Activated B cell treated with CpG ODN at 0.5 μM for 24 hours (primary cell): ENCODE measurements at regions of chr4 and their contacts with region 1.

Region 1: DNA sequence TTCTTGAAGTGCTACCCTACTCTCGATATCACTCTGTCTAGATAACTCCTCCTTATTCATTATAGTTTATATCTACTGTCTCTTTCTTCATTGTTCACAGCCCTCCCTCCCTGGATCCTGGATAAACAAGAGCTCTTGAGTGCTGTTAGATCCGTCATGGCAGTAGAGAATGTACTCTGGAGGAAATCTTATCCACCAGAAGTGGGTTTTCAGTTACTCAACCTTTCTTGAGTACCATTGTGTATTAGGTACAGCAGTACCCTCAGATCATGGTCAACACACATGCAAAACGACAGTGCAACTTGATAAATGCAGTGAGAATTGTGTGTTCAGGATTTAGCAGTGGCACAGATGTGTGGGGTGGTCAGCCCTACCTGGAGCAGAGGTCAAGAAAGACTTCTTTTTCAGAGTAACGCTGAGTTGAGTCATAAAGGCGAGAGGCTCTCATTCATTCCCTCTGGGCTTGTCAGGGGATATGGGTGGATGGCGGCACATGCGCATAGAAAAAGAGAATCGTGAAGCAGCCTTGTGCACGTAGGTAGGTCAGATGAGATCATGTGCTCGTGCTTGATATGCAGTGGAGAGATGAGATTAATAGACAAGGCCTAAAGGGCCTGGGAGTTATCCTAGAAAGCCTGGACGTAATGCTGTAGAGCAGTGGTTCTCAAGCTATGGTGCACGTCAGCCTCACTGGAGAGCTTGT is 89.5 kb downstream of the SNX25 start:
- DNase-seq: no peak
- ATAC-seq: no peak
- H3K4me3 Mint-ChIP-seq: no peak overlapping the region
- H3K27ac Mint-ChIP-seq: no peak overlapping the region
- H3K4me1 Mint-ChIP-seq: peaks cover 8% of the 10 kb centered on the region
- H3K27me3 Mint-ChIP-seq: no peaks in the 10 kb centered on the region
- CTCF ChIP-seq: no peak

Region 2: DNA sequence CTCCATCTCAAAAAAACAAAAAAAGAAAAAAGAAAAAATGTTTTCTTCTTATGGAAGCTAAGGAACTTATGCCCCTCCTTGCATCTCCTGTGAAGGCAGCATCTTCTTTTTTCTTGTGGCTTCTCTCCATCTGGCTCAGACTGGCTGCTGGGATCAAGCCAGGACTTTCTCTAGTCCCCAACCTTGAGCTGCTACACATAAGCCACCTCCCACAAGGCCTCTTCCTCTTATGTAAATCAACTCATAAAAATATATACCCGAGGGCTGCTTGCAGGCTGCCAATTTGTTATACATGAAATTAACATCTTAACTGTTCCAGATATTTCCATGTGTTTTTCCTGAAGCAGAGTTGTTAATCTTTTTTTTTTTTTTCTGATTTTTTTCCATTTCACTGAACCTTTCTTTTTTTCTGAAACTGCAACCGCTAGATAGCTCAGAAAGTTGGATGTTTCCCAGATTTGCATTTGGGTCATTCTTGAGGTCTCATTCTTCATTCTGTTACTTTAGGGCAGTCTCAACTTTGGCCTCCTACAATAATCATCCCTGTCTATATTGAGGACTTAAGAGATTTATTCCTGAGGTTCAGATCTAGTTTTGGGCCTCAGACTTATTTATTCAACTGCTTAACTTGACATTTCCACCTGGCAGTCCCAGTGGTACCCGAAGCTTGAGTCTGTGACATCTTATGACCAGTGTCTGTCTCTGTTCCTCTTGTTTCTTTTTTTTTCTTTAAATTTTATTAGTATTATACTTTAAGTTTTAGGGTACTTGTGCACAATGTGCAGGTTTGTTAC is 79.1 kb before region 1 on chr4:
- CTCF ChIA-PET with region 1: no interaction called
- POLR2A ChIA-PET with region 1: interaction called, 10 read pairs
- intact Hi-C with region 1: no loop called
- DNase-seq: no peak
- ATAC-seq: peak; percentile 82
- H3K4me3 Mint-ChIP-seq: peak overlapping the region; percentile 74
- H3K27ac Mint-ChIP-seq: peak overlapping the region; percentile 87
- H3K4me1 Mint-ChIP-seq: peaks cover 79% of the 10 kb centered on the region
- H3K27me3 Mint-ChIP-seq: no peaks in the 10 kb centered on the region
- CTCF ChIP-seq: no peak

Region 3: DNA sequence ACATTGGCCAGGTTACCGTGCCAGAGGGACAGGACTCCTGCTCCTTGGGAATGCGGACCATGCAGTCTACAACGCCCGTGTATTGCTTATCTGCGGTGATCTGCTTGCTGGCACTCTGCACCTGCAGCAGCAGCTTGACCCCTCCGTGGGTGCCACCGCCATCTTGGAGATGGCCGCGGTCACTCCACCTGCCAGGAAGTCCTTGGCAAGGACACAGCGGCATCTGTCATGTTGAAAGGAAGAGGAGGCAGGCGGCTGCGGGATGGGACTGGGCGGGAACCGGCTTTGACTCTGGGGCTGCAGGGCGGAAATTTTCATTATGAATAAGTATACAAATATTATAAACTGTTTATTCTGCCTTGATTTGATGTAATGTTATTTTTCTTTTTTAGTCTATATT is 1030.5 kb after region 1 on chr4:
- CTCF ChIA-PET with region 1: no interaction called
- POLR2A ChIA-PET with region 1: no interaction called
- intact Hi-C with region 1: no loop called
- DNase-seq: no peak
- ATAC-seq: no peak
- H3K4me3 Mint-ChIP-seq: no peak overlapping the region
- H3K27ac Mint-ChIP-seq: no peak overlapping the region
- H3K4me1 Mint-ChIP-seq: no peaks in the 10 kb centered on the region
- H3K27me3 Mint-ChIP-seq: no peaks in the 10 kb centered on the region
- CTCF ChIP-seq: no peak